ENCODE measurements at regions of chr6 and their contacts with region 1.

Region 1: GRCh38 chr6:1381481-1382330 is 7.7 kb upstream of the FOXF2 start:
- DNase-seq: no peak
- ATAC-seq: peak; percentile 65 to 72
- H3K4me3 ChIP-seq: peak overlapping the region; percentile 27 to 55 (median 36)
- H3K27ac ChIP-seq: no peak overlapping the region
- H3K4me1 ChIP-seq: peaks cover 7 to 18% of the 10 kb centered on the region in 2 donors
- H3K27me3 ChIP-seq: peaks cover 92 to 100% (median 96%) of the 10 kb centered on the region in 3 donors
- CTCF ChIP-seq: peak; percentile 70 to 93 (median 86)
- POLR2A ChIP-seq: no peak

Region 2: GRCh38 chr6:593139-593906 is 788.4 kb before region 1 on chr6:
- in situ Hi-C with region 1: loop called in 2 of 4 experiments (anchors 25 kb)
- intact Hi-C with region 1: loop called (anchors 5 kb)
- DNase-seq: no peak
- ATAC-seq: peak; percentile 54 to 74
- H3K4me3 ChIP-seq: no peak overlapping the region
- H3K27ac ChIP-seq: no peak overlapping the region
- H3K4me1 ChIP-seq: no peaks in the 10 kb centered on the region
- H3K27me3 ChIP-seq: no peaks in the 10 kb centered on the region
- CTCF ChIP-seq: peak; percentile 58 to 81 (median 72)
- POLR2A ChIP-seq: no peak

Region 3: DNA sequence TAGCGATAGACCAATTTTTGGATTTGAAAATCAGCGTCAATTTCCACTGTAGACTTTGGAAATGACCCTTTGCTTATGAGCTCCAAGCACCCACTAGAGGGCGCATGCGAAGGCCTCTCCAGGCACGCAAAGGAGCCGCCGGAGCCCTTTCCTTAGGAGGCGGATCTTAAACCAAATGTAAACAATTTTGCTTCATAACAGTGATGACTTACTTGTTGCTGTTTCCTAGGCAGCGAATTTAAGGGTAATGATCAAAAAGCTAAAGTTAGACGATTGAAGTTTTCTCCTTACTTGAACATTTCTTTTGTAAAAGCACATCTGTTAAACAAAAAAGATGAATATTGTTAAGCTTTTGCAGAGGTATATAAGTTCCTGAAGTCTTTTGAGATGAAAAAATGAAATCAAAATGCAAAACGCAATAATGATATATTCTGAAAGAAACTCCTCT is 659.6 kb before region 1 on chr6:
- in situ Hi-C with region 1: loop called in 1 of 4 experiments (anchors 25 kb)
- intact Hi-C with region 1: loop called (anchors 2 kb)
- DNase-seq: peak; percentile 32 to 38
- ATAC-seq: peak in 1 of 2 donors; percentile 33
- H3K4me3 ChIP-seq: no peak overlapping the region
- H3K27ac ChIP-seq: no peak overlapping the region
- H3K4me1 ChIP-seq: no peaks in the 10 kb centered on the region
- H3K27me3 ChIP-seq: peaks cover 0 to under 1% (median 0%) of the 10 kb centered on the region in 3 donors
- CTCF ChIP-seq: peak; percentile 47 to 88 (median 56)
- POLR2A ChIP-seq: no peak

Region 4: DNA sequence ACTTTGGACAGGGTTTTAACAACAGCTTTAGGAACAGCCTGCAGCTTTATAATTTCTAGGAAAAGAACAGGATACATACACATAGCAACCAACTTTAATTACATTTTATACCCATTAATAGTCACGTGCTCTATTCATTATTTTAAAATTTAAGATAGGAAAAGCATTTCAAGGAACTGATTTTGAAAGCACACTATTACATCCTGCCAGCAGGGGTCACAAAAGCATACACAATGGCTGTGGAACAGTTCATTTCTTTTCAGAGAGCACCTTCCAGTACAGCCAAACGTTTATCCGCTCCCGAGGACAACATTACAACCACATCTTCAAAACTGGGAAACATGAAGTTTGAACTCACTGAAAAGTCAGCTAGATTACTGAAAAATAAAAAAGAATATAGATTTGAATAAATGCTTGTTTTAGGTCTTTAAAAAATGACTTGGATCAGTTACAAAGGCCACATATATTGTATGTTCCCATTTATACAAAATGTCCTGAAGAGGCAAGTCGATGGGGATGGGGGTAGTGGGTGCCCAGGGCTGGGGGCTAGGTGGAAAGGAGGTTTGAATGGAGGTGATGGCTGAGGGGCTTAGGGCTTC is 584.1 kb before region 1 on chr6:
- in situ Hi-C with region 1: loop called (anchors 10 to 25 kb)
- intact Hi-C with region 1: loop called (anchors 1 kb)
- DNase-seq: no peak
- ATAC-seq: peak in 1 of 2 donors; percentile 47
- H3K4me3 ChIP-seq: no peak overlapping the region
- H3K27ac ChIP-seq: no peak overlapping the region
- H3K4me1 ChIP-seq: no peaks in the 10 kb centered on the region
- H3K27me3 ChIP-seq: peaks cover 4 to 29% (median 18%) of the 10 kb centered on the region in 3 donors
- CTCF ChIP-seq: peak; percentile 50 to 74 (median 66)
- POLR2A ChIP-seq: no peak

Region 5: GRCh38 chr6:912871-913835 is 468.6 kb before region 1 on chr6:
- in situ Hi-C with region 1: no loop called
- intact Hi-C with region 1: loop called (anchors 5 kb)
- DNase-seq: no peak
- ATAC-seq: no peak
- H3K4me3 ChIP-seq: no peak overlapping the region
- H3K27ac ChIP-seq: no peak overlapping the region
- H3K4me1 ChIP-seq: no peaks in the 10 kb centered on the region
- H3K27me3 ChIP-seq: no peaks in the 10 kb centered on the region
- CTCF ChIP-seq: peak in 2 of 5 experiments; percentile 27
- POLR2A ChIP-seq: no peak

Region 6: GRCh38 chr6:1110164-1110563 is 271.5 kb before region 1 on chr6:
- in situ Hi-C with region 1: no loop called
- intact Hi-C with region 1: loop called (anchors 5 kb)
- DNase-seq: no peak
- ATAC-seq: no peak
- H3K4me3 ChIP-seq: no peak overlapping the region
- H3K27ac ChIP-seq: no peak overlapping the region
- H3K4me1 ChIP-seq: no peaks in the 10 kb centered on the region
- H3K27me3 ChIP-seq: peaks cover 0 to 5% (median 0%) of the 10 kb centered on the region in 3 donors
- CTCF ChIP-seq: no peak
- POLR2A ChIP-seq: no peak

Region 7: GRCh38 chr6:1311400-1312202 is 70.1 kb before region 1 on chr6 and contains the start of gene FOXQ1:
- in situ Hi-C with region 1: no loop called
- intact Hi-C with region 1: loop called (anchors 5 kb)
- DNase-seq: no peak
- ATAC-seq: peak in 1 of 2 donors; percentile 52
- H3K4me3 ChIP-seq: peak within 1 kb of the TSS; percentile 39 to 66 (median 42)
- H3K27ac ChIP-seq: no peak within 1 kb of the TSS
- H3K4me1 ChIP-seq: peaks cover 5 to 18% of the 10 kb centered on the region in 2 donors
- H3K27me3 ChIP-seq: peaks cover 47 to 68% (median 67%) of the 10 kb centered on the region in 3 donors
- CTCF ChIP-seq: no peak
- POLR2A ChIP-seq: no peak
- total RNA-seq, gene FOXQ1: 0.42 TPM in 1 of 4 donors, not detected in the others

Region 8: GRCh38 chr6:1494671-1495070 is 113.0 kb after region 1 on chr6:
- in situ Hi-C with region 1: no loop called
- intact Hi-C with region 1: no loop called
- DNase-seq: no peak
- ATAC-seq: no peak
- H3K4me3 ChIP-seq: no peak overlapping the region
- H3K27ac ChIP-seq: no peak overlapping the region
- H3K4me1 ChIP-seq: no peaks in the 10 kb centered on the region
- H3K27me3 ChIP-seq: no peaks in the 10 kb centered on the region
- CTCF ChIP-seq: no peak
- POLR2A ChIP-seq: no peak

Region 9: GRCh38 chr6:1838604-1839213 is 457.0 kb after region 1 on chr6:
- in situ Hi-C with region 1: no loop called
- intact Hi-C with region 1: no loop called
- DNase-seq: no peak
- ATAC-seq: no peak
- H3K4me3 ChIP-seq: no peak overlapping the region
- H3K27ac ChIP-seq: no peak overlapping the region
- H3K4me1 ChIP-seq: no peaks in the 10 kb centered on the region
- H3K27me3 ChIP-seq: no peaks in the 10 kb centered on the region
- CTCF ChIP-seq: no peak
- POLR2A ChIP-seq: no peak

Measured in gastrocnemius medialis (tissue), 4 donors.